ENCODE measurements at regions of chr10 and their contacts with region 1.

Region 1: GRCh38 chr10:27241652-27242472 is 1.3 kb upstream of the ACBD5 start:
- DNase-seq: peak; percentile 79 to 89 (median 85)
- ATAC-seq: peak; percentile 82
- H3K4me3 ChIP-seq: peak overlapping the region; percentile 80
- H3K4me3 Mint-ChIP-seq: peak overlapping the region; percentile 91 to 99 (median 98)
- H3K27ac ChIP-seq: peak overlapping the region; percentile 93
- H3K27ac Mint-ChIP-seq: peak overlapping the region; percentile 93 to 100 (median 97)
- H3K4me1 ChIP-seq: peaks cover 8 to 21% of the 10 kb centered on the region in 2 donors
- H3K4me1 Mint-ChIP-seq: peaks cover 17 to 35% (median 34%) of the 10 kb centered on the region in 7 donors
- H3K27me3 ChIP-seq: no peaks in the 10 kb centered on the region
- H3K27me3 Mint-ChIP-seq: peaks cover 0 to 5% (median 0%) of the 10 kb centered on the region in 5 donors

Region 2: GRCh38 chr10:26486991-26487850 is 754.6 kb before region 1 on chr10:
- CTCF ChIA-PET with region 1: no interaction called
- POLR2A ChIA-PET with region 1: no interaction called
- intact Hi-C with region 1: loop called (anchors 5 kb)
- DNase-seq: peak in 8 of 9 donors; percentile 50 to 86 (median 66)
- ATAC-seq: peak; percentile 85
- H3K4me3 ChIP-seq: peak overlapping the region; percentile 43
- H3K4me3 Mint-ChIP-seq: peak overlapping the region; percentile 8 to 83 (median 74)
- H3K27ac ChIP-seq: peak overlapping the region; percentile 84
- H3K27ac Mint-ChIP-seq: peak overlapping the region; percentile 90 to 97 (median 94)
- H3K4me1 ChIP-seq: peaks cover 56 to 64% of the 10 kb centered on the region in 2 donors
- H3K4me1 Mint-ChIP-seq: peaks cover 57 to 82% (median 74%) of the 10 kb centered on the region in 7 donors
- H3K27me3 ChIP-seq: no peaks in the 10 kb centered on the region
- H3K27me3 Mint-ChIP-seq: no peaks in the 10 kb centered on the region

Region 3: GRCh38 chr10:26881600-26882331 is 360.1 kb before region 1 on chr10:
- CTCF ChIA-PET with region 1: no interaction called
- POLR2A ChIA-PET with region 1: no interaction called
- intact Hi-C with region 1: loop called in 1 of 2 experiments (anchors 5 kb)
- DNase-seq: peak in 6 of 9 donors; percentile 23 to 60 (median 37)
- ATAC-seq: peak; percentile 87
- H3K4me3 ChIP-seq: no peak overlapping the region
- H3K4me3 Mint-ChIP-seq: no peak overlapping the region
- H3K27ac ChIP-seq: no peak overlapping the region
- H3K27ac Mint-ChIP-seq: no peak overlapping the region
- H3K4me1 ChIP-seq: no peaks in the 10 kb centered on the region
- H3K4me1 Mint-ChIP-seq: peaks cover 0 to 8% (median 0%) of the 10 kb centered on the region in 7 donors
- H3K27me3 ChIP-seq: no peaks in the 10 kb centered on the region
- H3K27me3 Mint-ChIP-seq: peaks cover 4 to 37% (median 13%) of the 10 kb centered on the region in 5 donors

Region 4: GRCh38 chr10:27223964-27224363 is 17.9 kb before region 1 on chr10:
- CTCF ChIA-PET with region 1: interaction called, 8 read pairs
- POLR2A ChIA-PET with region 1: interaction called, 5 read pairs
- intact Hi-C with region 1: loop called (anchors 1 kb)
- DNase-seq: peak in 7 of 9 donors; percentile 20 to 60 (median 44)
- ATAC-seq: peak; percentile 71
- H3K4me3 ChIP-seq: no peak overlapping the region
- H3K4me3 Mint-ChIP-seq: no peak overlapping the region
- H3K27ac ChIP-seq: no peak overlapping the region
- H3K27ac Mint-ChIP-seq: peak overlapping the region in 1 of 9 donors; percentile 1
- H3K4me1 ChIP-seq: peaks cover 0 to 36% of the 10 kb centered on the region in 2 donors
- H3K4me1 Mint-ChIP-seq: peaks cover 8 to 20% (median 11%) of the 10 kb centered on the region in 7 donors
- H3K27me3 ChIP-seq: no peaks in the 10 kb centered on the region
- H3K27me3 Mint-ChIP-seq: no peaks in the 10 kb centered on the region

Region 5: DNA sequence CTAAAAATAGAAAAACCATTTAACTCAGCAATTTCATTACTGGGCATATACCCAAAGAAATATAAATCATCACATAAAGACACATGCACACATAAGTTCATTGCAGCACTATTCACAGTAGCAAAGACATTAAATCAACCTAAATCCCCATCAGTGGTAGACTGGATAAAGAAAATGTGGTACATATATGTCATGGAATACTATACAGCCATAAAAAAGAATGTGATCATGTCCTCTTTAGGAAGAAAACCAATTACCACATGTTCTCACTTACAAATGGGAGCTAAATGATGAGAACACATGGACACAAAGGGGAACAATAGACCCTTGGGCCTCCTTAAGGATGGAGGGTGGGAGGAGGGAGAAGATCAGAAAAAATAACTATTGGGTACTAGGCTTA is 34.7 kb after region 1 on chr10:
- CTCF ChIA-PET with region 1: no interaction called
- POLR2A ChIA-PET with region 1: no interaction called
- intact Hi-C with region 1: no loop called
- DNase-seq: no peak
- ATAC-seq: no peak
- H3K4me3 ChIP-seq: no peak overlapping the region
- H3K4me3 Mint-ChIP-seq: no peak overlapping the region
- H3K27ac ChIP-seq: no peak overlapping the region
- H3K27ac Mint-ChIP-seq: no peak overlapping the region
- H3K4me1 ChIP-seq: no peaks in the 10 kb centered on the region
- H3K4me1 Mint-ChIP-seq: peaks cover 0 to 1% (median 0%) of the 10 kb centered on the region in 7 donors
- H3K27me3 ChIP-seq: peaks cover 4 to 7% of the 10 kb centered on the region in 2 donors
- H3K27me3 Mint-ChIP-seq: peaks cover 18 to 68% (median 41%) of the 10 kb centered on the region in 5 donors

Region 6: DNA sequence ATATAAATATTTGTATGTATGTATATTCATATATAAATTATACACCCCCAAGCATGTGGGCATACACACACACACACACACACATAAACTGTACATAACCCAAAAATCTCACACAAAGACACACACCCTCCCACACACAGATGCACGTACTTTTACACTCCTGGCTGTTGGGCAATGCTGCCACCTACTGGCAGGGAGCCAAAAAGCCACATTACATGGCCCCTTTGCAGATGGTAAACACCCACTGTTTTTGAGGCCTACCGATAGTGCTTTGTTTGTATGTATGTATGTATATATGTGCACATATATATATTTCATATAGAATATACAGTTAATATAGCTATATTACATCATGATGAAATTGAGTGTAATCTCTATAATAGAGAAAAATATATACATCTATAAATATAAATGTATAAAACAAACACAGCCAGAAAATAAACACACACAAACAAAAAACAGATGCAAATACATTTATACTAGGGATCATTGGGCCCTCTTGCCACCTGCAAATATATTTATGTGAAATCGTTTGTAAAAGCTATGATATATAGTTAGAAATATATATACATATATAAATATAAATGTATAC is 118.8 kb after region 1 on chr10:
- CTCF ChIA-PET with region 1: no interaction called
- POLR2A ChIA-PET with region 1: interaction called, 3 read pairs
- intact Hi-C with region 1: loop called in 1 of 2 experiments (anchors 5 kb)
- DNase-seq: peak; percentile 67 to 85 (median 81)
- ATAC-seq: peak; percentile 97
- H3K4me3 ChIP-seq: no peak overlapping the region
- H3K4me3 Mint-ChIP-seq: no peak overlapping the region
- H3K27ac ChIP-seq: no peak overlapping the region
- H3K27ac Mint-ChIP-seq: no peak overlapping the region
- H3K4me1 ChIP-seq: no peaks in the 10 kb centered on the region
- H3K4me1 Mint-ChIP-seq: no peaks in the 10 kb centered on the region
- H3K27me3 ChIP-seq: no peaks in the 10 kb centered on the region
- H3K27me3 Mint-ChIP-seq: no peaks in the 10 kb centered on the region

Region 7: GRCh38 chr10:28302638-28303488 is 1061.0 kb after region 1 on chr10 and contains the start of gene MPP7:
- CTCF ChIA-PET with region 1: no interaction called
- POLR2A ChIA-PET with region 1: interaction called, 3 read pairs
- intact Hi-C with region 1: loop called in 1 of 2 experiments (anchors 2 kb)
- DNase-seq: peak; percentile 96 to 98 (median 97)
- ATAC-seq: peak; percentile 97
- H3K4me3 ChIP-seq: peak within 1 kb of the TSS; percentile 92
- H3K4me3 Mint-ChIP-seq: peak within 1 kb of the TSS; percentile 85 to 99 (median 93)
- H3K27ac ChIP-seq: peak within 1 kb of the TSS; percentile 86
- H3K27ac Mint-ChIP-seq: peak within 1 kb of the TSS; percentile 67 to 98 (median 94)
- H3K4me1 ChIP-seq: peaks cover 8 to 42% of the 10 kb centered on the region in 2 donors
- H3K4me1 Mint-ChIP-seq: peaks cover 27 to 80% (median 67%) of the 10 kb centered on the region in 7 donors
- H3K27me3 ChIP-seq: no peaks in the 10 kb centered on the region
- H3K27me3 Mint-ChIP-seq: peaks cover 0 to 51% (median 0%) of the 10 kb centered on the region in 5 donors
- total RNA-seq, gene MPP7: 9.7 to 44.7 (median 36.1) TPM